Activated CD8-positive, alpha-beta memory T cell treated with anti-CD3 and anti-CD28 coated beads, Interleukin-2, amount 10 ng/mL, durations not matched to agents 7 days and 5 days (primary cell): ENCODE measurements at regions of chr1 and their contacts with region 1.

Region 1: DNA sequence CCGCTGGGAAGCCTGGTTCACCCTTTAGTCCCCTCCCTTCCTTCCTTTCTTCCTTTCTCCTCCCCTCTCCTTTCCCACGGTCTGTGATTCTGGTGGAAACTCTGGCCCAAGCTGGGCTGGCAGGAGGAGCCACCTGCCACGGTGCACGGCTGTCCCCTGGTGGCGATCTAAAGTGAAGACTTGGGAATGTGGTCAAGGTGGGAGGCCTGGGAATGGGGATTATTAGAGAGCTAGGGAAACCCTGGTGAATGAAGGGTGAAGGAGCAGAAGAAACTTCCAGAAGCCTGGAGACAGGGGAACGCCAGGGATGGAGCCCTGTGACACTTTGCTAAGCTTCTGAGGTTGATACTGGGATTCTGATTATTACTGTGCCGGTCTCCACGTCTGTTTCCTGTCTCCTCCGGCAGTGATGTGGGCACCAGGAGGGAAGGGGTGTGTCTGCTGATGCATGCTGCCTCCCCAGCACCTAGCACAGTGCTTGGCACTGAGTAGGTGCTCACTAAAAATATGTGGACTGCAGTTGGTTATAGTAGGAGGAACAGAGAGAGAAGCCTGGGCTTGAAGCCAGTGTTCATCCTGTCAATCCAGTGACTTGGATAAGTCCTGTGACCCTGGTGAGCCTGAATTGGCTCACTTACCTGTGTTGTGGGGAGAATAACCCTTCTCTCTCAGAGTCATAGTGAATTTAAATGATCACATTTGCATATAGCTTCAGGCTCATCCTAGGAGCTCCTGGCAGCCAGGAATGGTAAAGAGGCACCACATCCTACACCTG is 71.2 kb upstream of the NBPF3 start:
- DNase-seq: peak; percentile 63
- ATAC-seq: peak; percentile 67
- H3K4me3 Mint-ChIP-seq: no peak overlapping the region
- H3K27ac Mint-ChIP-seq: no peak overlapping the region
- H3K4me1 Mint-ChIP-seq: peaks cover 6% of the 10 kb centered on the region
- H3K27me3 Mint-ChIP-seq: no peaks in the 10 kb centered on the region

Region 2: GRCh38 chr1:21200767-21201166 is 167.9 kb before region 1 on chr1:
- CTCF ChIA-PET with region 1: interaction called, 10 read pairs
- DNase-seq: no peak
- ATAC-seq: no peak
- H3K4me3 Mint-ChIP-seq: no peak overlapping the region
- H3K27ac Mint-ChIP-seq: no peak overlapping the region
- H3K4me1 Mint-ChIP-seq: no peaks in the 10 kb centered on the region
- H3K27me3 Mint-ChIP-seq: peaks cover 3% of the 10 kb centered on the region

Region 3: DNA sequence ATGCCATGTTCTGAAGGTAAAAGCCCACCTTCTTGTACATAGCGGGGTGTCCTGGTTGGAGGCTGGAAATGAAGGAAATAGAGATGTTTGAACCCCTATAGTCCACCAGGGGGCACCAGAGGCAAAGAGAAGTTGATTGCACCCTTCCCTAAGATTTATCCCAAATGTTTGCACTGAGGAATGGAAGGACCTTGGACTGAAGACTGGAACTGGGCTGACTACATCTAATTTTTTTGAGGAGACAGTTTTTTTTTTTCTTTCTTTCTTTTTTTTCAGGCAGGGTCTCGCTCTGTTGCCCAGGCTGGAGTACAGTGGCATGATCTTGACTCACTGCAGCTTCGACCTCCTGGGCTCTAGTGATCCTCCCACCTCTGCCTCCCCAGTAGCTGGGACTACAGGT is 136.7 kb before region 1 on chr1:
- CTCF ChIA-PET with region 1: interaction called, 138 read pairs
- DNase-seq: no peak
- ATAC-seq: peak; percentile 69
- H3K4me3 Mint-ChIP-seq: no peak overlapping the region
- H3K27ac Mint-ChIP-seq: no peak overlapping the region
- H3K4me1 Mint-ChIP-seq: no peaks in the 10 kb centered on the region
- H3K27me3 Mint-ChIP-seq: no peaks in the 10 kb centered on the region

Region 4: GRCh38 chr1:21270086-21270689 is 98.5 kb before region 1 on chr1:
- CTCF ChIA-PET with region 1: interaction called, 41 read pairs
- DNase-seq: peak; percentile 85
- ATAC-seq: peak; percentile 82
- H3K4me3 Mint-ChIP-seq: no peak overlapping the region
- H3K27ac Mint-ChIP-seq: no peak overlapping the region
- H3K4me1 Mint-ChIP-seq: peaks cover 4% of the 10 kb centered on the region
- H3K27me3 Mint-ChIP-seq: no peaks in the 10 kb centered on the region

Region 5: GRCh38 chr1:21381361-21381760 is 12.7 kb after region 1 on chr1:
- CTCF ChIA-PET with region 1: interaction called, 11 read pairs
- DNase-seq: no peak
- ATAC-seq: no peak
- H3K4me3 Mint-ChIP-seq: no peak overlapping the region
- H3K27ac Mint-ChIP-seq: no peak overlapping the region
- H3K4me1 Mint-ChIP-seq: peaks cover 12% of the 10 kb centered on the region
- H3K27me3 Mint-ChIP-seq: peaks cover 38% of the 10 kb centered on the region

Region 6: GRCh38 chr1:21436488-21437340 is 68.0 kb after region 1 on chr1:
- CTCF ChIA-PET with region 1: no interaction called
- DNase-seq: no peak
- ATAC-seq: no peak
- H3K4me3 Mint-ChIP-seq: peak overlapping the region; percentile 20
- H3K27ac Mint-ChIP-seq: no peak overlapping the region
- H3K4me1 Mint-ChIP-seq: peaks cover 16% of the 10 kb centered on the region
- H3K27me3 Mint-ChIP-seq: peaks cover 36% of the 10 kb centered on the region